CD8-positive, alpha-beta T cell (primary cell): ENCODE measurements at regions of chr17 and their contacts with region 1.

Region 1: GRCh38 chr17:716238-716637 is 1.6 kb upstream of the VPS53 start:
- DNase-seq: no peak
- ATAC-seq: no peak
- H3K4me3 ChIP-seq: no peak overlapping the region
- H3K4me3 Mint-ChIP-seq: no peak overlapping the region
- H3K27ac ChIP-seq: no peak overlapping the region
- H3K27ac Mint-ChIP-seq: no peak overlapping the region
- H3K4me1 ChIP-seq: peaks cover 18% of the 10 kb centered on the region
- H3K4me1 Mint-ChIP-seq: peaks cover 31% of the 10 kb centered on the region
- H3K27me3 ChIP-seq: no peaks in the 10 kb centered on the region
- H3K27me3 Mint-ChIP-seq: no peaks in the 10 kb centered on the region
- CTCF ChIP-seq: no peak

Region 2: DNA sequence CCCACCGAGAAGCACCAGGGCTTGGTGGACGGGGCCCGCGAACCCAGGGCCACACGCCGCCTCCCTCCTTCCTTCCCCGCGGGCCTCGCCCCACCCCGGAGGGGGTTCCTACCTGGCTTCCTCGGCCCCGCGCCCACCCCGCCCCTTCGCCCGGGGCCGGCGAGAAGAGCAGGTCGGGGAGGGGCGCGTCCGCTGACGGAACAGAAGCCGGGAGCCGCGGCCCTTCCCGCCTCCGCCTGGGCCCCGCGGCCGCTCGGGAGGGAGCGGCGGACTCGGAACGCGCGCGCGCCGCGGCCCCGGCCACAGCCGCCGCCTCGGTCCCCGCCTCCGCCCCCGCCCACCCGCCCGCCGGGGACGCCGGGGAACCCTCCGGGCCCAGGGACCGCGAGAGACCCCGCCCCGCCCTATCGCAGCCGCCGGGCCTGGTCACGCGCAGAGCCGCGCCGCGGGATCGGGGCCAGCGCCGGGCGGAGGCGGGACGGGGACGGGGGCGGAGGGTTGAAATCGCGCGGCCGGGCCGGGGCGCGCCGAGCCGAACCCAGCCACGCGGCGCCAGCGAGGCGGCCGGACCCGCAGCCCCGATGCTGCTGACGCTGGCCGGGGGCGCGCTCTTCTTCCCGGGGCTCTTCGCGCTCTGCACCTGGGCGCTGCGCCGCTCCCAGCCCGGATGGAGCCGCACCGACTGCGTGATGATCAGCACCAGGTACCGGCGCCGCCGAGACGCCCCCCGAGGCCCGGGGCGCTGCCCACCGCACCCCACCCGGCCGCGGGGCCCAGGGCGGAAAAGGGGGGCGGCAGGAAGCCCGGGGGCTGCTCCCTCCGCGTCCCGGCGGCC is 16.0 kb after region 1 on chr17 and contains the start of gene TLCD3A:
- CTCF ChIA-PET with region 1: no interaction called
- POLR2A ChIA-PET with region 1: interaction called, 4 read pairs
- intact Hi-C with region 1: loop called (anchors 2 kb)
- DNase-seq: peak in 7 of 9 experiments; percentile 35 to 73 (median 61)
- ATAC-seq: peak; percentile 73
- H3K4me3 ChIP-seq: peak within 1 kb of the TSS; percentile 52
- H3K4me3 Mint-ChIP-seq: peak within 1 kb of the TSS; percentile 87
- H3K27ac ChIP-seq: no peak within 1 kb of the TSS
- H3K27ac Mint-ChIP-seq: peak within 1 kb of the TSS; percentile 57
- H3K4me1 ChIP-seq: peaks cover 7% of the 10 kb centered on the region
- H3K4me1 Mint-ChIP-seq: peaks cover 11% of the 10 kb centered on the region
- H3K27me3 ChIP-seq: no peaks in the 10 kb centered on the region
- H3K27me3 Mint-ChIP-seq: no peaks in the 10 kb centered on the region
- CTCF ChIP-seq: no peak
- total RNA-seq, gene TLCD3A: 1.5 to 3.2 TPM

Region 3: GRCh38 chr17:752002-752619 is 35.9 kb after region 1 on chr17 and contains the start of gene GEMIN4:
- CTCF ChIA-PET with region 1: no interaction called
- POLR2A ChIA-PET with region 1: interaction called, 4 read pairs
- intact Hi-C with region 1: loop called (anchors 1 kb)
- DNase-seq: peak; percentile 94 to 100 (median 98)
- ATAC-seq: peak; percentile 89
- H3K4me3 ChIP-seq: peak within 1 kb of the TSS; percentile 77 to 94
- H3K4me3 Mint-ChIP-seq: peak within 1 kb of the TSS; percentile 96
- H3K27ac ChIP-seq: peak within 1 kb of the TSS; percentile 60 to 65
- H3K27ac Mint-ChIP-seq: peak within 1 kb of the TSS; percentile 97
- H3K4me1 ChIP-seq: peaks cover 28% of the 10 kb centered on the region
- H3K4me1 Mint-ChIP-seq: peaks cover 41% of the 10 kb centered on the region
- H3K27me3 ChIP-seq: no peaks in the 10 kb centered on the region
- H3K27me3 Mint-ChIP-seq: no peaks in the 10 kb centered on the region
- CTCF ChIP-seq: peak; percentile 86
- total RNA-seq, gene GEMIN4: 19.1 to 19.2 TPM

Region 4: DNA sequence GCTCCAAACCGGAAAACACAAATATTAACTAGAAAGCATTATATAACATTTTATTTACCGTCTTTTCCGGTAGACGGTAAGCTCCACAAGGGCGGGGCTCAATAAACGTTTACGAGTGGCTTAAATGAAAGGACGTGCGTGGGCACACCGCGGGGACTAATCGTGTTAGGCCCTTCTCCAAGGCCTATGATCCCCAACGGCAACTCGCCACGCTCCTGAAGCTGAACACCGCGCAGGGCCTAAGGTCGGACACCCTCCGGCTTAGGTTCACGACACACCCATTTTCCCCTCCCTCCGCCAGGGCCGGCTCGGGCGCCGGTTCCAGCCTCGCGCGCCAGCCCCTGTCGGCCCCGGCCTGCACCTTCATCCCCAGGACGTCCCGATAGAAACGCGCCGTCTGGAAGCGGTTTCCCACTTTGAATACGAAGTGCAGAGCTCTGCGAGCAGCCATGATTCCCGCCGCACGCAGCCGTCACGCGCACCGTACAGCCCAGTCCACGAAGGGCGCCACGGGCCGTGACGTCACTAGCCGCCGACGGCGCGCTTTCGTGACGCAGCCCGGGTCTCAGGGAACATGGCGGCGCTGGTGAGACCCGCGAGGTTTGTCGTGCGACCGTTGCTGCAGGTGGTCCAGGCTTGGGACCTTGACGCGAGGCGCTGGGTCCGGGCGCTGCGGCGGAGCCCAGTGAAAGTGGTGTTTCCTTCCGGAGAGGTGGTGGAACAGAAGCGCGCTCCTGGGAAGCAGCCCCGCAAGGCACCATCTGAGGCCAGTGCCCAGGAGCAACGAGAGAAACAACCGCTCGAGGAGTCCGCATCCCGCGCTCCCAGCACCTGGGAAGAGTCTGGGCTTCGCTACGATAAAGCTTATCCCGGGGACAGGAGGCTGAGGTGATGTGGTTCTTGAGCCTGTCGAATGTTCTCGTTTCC is 65.8 kb after region 1 on chr17 and contains the starts of genes GLOD4 and MRM3:
- CTCF ChIA-PET with region 1: no interaction called
- POLR2A ChIA-PET with region 1: interaction called, 3 read pairs
- intact Hi-C with region 1: loop called (anchors 1 kb)
- DNase-seq: peak; percentile 91 to 99 (median 95)
- ATAC-seq: peak; percentile 94
- H3K4me3 ChIP-seq: peak within 1 kb of the TSS; percentile 92 to 100
- H3K4me3 Mint-ChIP-seq: peak within 1 kb of the TSS; percentile 97
- H3K27ac ChIP-seq: peak within 1 kb of the TSS; percentile 94 to 97
- H3K27ac Mint-ChIP-seq: peak within 1 kb of the TSS; percentile 97
- H3K4me1 ChIP-seq: peaks cover 28% of the 10 kb centered on the region
- H3K4me1 Mint-ChIP-seq: peaks cover 34% of the 10 kb centered on the region
- H3K27me3 ChIP-seq: no peaks in the 10 kb centered on the region
- H3K27me3 Mint-ChIP-seq: no peaks in the 10 kb centered on the region
- CTCF ChIP-seq: no peak
- total RNA-seq, gene GLOD4: 80.7 to 86.2 TPM
- total RNA-seq, gene MRM3: 47.4 to 49.7 TPM